Activated CD4-positive, alpha-beta T cell treated with anti-CD3 and anti-CD28 coated beads for 36 hours (primary cell): ENCODE measurements at regions of chr19 and their contacts with region 1.

Region 1: GRCh38 chr19:48872182-48872883 is at the start of gene PPP1R15A:
- DNase-seq: peak; percentile 99
- ATAC-seq: peak; percentile 50
- H3K4me3 Mint-ChIP-seq: peak within 1 kb of the TSS; percentile 98
- H3K27ac Mint-ChIP-seq: peak within 1 kb of the TSS; percentile 99
- H3K4me1 Mint-ChIP-seq: peaks cover 41% of the 10 kb centered on the region
- H3K27me3 Mint-ChIP-seq: no peaks in the 10 kb centered on the region
- total RNA-seq, gene PPP1R15A: 51.6 to 62.4 TPM

Region 2: DNA sequence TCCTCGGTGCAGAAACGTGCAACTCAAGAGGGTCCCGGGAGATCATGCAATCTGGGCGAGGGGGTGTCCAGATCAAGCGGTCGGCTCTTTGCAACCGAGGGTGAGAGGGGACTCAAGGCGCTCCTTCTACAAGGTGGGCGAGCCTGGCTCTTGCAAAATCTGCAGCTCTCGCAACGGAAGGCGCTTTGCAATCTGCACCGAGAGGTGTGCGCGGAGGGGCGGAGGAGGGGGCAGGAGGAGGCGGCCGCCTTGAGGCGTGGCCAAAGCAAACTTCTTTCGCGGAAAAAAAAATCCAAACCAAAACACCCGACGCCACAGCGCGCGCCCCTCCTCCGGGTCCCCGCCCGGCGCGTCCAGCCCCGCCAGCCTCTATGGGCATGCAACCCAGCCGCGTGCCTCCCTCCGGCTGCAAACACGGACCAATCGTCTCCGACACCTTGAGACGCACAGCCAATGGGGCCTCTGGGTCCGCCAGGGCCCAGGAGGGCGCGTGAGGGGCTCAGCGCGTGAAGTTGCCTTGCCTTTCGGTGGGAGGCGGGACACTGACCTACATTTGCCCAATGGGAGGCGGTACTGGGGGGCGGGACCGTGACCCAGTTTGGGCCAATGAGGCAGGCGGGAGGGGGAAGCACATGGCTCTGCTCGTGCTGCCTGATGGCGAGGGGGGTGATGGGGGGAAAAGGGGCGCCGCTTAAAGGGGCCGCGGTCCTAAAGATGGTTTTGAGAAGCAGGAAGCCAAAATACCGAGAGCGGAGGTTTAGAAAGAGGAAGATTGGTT is 235.0 kb before region 1 on chr19 and contains the start of gene DBP:
- CTCF ChIA-PET with region 1: no interaction called
- POLR2A ChIA-PET with region 1: no interaction called
- intact Hi-C with region 1: loop called in 1 of 2 experiments (anchors 1 kb)
- DNase-seq: peak; percentile 98
- ATAC-seq: peak; percentile 75
- H3K4me3 Mint-ChIP-seq: peak within 1 kb of the TSS; percentile 83
- H3K27ac Mint-ChIP-seq: peak within 1 kb of the TSS; percentile 99
- H3K4me1 Mint-ChIP-seq: peaks cover 55% of the 10 kb centered on the region
- H3K27me3 Mint-ChIP-seq: no peaks in the 10 kb centered on the region
- total RNA-seq, gene DBP: 8.3 to 12.4 TPM

Region 3: DNA sequence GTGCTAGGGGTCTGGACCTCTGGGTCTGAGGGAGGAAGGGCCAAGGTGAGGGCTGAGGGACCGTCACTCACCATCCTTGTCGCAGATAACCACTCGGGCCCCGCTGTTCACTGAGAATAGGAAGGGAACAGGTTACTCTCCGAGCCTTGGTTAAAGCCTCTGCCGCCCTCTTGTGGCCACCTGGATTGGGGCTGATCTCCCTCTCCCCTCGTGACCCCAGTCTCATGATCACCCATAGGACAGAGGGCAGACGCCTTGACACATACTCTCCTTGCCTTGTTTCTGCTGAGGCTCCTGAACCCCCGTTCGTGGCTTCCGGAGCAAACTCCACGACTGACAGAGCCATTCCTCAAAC is 36.6 kb before region 1 on chr19:
- CTCF ChIA-PET with region 1: interaction called, 5 read pairs
- POLR2A ChIA-PET with region 1: interaction called, 4 read pairs
- intact Hi-C with region 1: loop called in 1 of 2 experiments (anchors 1 kb)
- DNase-seq: peak; percentile 98
- ATAC-seq: peak; percentile 99
- H3K4me3 Mint-ChIP-seq: peak overlapping the region; percentile 71
- H3K27ac Mint-ChIP-seq: peak overlapping the region; percentile 83
- H3K4me1 Mint-ChIP-seq: peaks cover 18% of the 10 kb centered on the region
- H3K27me3 Mint-ChIP-seq: no peaks in the 10 kb centered on the region

Region 4: GRCh38 chr19:48954595-48955310 is 82.4 kb after region 1 on chr19 and contains the start of gene BAX:
- CTCF ChIA-PET with region 1: no interaction called
- POLR2A ChIA-PET with region 1: interaction called, 4 read pairs
- intact Hi-C with region 1: loop called in 1 of 2 experiments (anchors 1 kb)
- DNase-seq: peak; percentile 98
- ATAC-seq: peak; percentile 89
- H3K4me3 Mint-ChIP-seq: peak within 1 kb of the TSS; percentile 74
- H3K27ac Mint-ChIP-seq: peak within 1 kb of the TSS; percentile 87
- H3K4me1 Mint-ChIP-seq: peaks cover 26% of the 10 kb centered on the region
- H3K27me3 Mint-ChIP-seq: no peaks in the 10 kb centered on the region
- total RNA-seq, gene BAX: 128 to 143 TPM

Region 5: GRCh38 chr19:49331616-49332055 is 459.3 kb after region 1 on chr19:
- CTCF ChIA-PET with region 1: no interaction called
- POLR2A ChIA-PET with region 1: no interaction called
- intact Hi-C with region 1: loop called in 1 of 2 experiments (anchors 10 kb)
- DNase-seq: peak; percentile 80
- ATAC-seq: peak; percentile 80
- H3K4me3 Mint-ChIP-seq: peak overlapping the region; percentile 33
- H3K27ac Mint-ChIP-seq: peak overlapping the region; percentile 75
- H3K4me1 Mint-ChIP-seq: peaks cover 81% of the 10 kb centered on the region
- H3K27me3 Mint-ChIP-seq: no peaks in the 10 kb centered on the region